Heart right ventricle (tissue), 16 donors: ENCODE measurements at regions of chr9 and their contacts with region 1.

Region 1: DNA sequence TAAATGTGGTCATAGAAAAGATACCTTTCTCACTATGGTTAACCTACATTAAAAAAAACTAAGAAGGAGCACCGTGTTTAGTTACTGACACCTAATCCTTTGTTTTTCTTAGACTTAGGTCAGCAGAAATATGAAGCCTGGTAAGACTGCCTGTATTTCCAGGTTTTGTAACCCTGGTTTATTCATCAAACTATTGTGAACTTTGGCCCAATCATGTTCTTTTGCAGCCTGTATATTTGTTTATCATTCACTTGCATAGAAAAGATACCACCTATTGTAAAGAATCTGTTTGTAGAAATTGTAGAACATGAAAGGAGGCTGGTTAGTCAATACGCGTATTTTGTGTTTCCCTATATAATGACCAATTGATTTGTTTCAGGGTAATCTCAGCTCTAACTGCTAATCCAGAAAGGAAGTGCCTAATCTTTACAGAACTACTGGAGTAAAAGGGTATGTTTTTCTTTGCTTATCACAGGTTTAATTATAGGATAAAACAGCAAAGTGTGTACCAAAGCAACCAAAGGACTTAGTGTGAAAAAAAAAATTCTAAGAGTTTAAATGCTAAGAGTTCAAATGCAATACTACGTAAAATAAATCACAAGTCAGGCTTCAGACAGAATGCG is 103.6 kb downstream of the LURAP1L start:
- DNase-seq: no peak
- ATAC-seq: no peak
- H3K4me3 ChIP-seq: no peak overlapping the region
- H3K27ac ChIP-seq: no peak overlapping the region
- H3K4me1 ChIP-seq: peaks cover 0 to 47% (median 10%) of the 10 kb centered on the region in 9 donors
- H3K27me3 ChIP-seq: no peaks in the 10 kb centered on the region
- CTCF ChIP-seq: no peak

Region 2: GRCh38 chr9:12813960-12814876 is 64.2 kb before region 1 on chr9:
- intact Hi-C with region 1: loop called in 3 of 10 experiments (anchors 5 to 10 kb)
- DNase-seq: peak; percentile 11 to 15
- ATAC-seq: peak in 7 of 8 donors; percentile 59 to 93 (median 84)
- H3K4me3 ChIP-seq: peak overlapping the region in 4 of 10 donors; percentile 1 to 31 (median 12)
- H3K27ac ChIP-seq: peak overlapping the region in 7 of 10 donors; percentile 17 to 67 (median 49)
- H3K4me1 ChIP-seq: peaks cover 0 to 54% (median 20%) of the 10 kb centered on the region in 9 donors
- H3K27me3 ChIP-seq: no peaks in the 10 kb centered on the region
- CTCF ChIP-seq: peak in 3 of 9 donors; percentile 26 to 47 (median 41)

Region 3: DNA sequence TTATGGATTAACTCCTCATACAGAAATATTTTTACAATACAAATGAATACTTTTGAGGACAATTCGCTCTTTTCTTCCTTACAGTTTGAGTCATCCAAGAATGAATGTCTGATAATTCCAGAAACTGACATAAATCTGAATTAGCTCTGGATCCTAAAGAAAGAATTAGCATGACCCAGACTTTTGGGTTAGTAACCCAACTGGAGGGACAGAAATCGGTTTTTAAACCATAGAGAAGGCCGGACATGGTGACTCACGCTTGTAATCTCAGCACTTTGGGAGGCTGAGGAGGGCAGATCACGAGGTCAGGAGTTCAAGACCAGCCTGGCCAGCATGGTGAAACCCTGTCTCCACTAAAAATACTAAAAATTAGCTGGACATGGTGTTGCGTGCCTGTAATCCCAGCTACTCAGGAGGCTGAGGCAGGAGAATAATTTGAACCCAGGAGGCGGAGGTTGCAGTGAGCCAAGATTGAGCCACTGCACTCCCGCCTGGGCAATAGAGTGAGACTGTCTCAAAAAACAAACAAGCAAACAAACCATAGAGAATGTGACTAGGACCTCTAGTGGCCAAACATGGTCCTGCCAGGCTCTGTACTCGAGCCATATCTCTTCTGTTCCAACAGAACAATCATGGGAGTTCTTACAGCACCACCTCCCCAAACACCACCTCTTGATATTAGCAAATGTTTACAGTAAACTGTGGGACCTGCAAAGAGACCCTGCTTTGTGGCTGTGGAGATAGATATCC is 58.9 kb before region 1 on chr9:
- intact Hi-C with region 1: loop called in 5 of 10 experiments (anchors 5 to 10 kb)
- DNase-seq: no peak
- ATAC-seq: no peak
- H3K4me3 ChIP-seq: no peak overlapping the region
- H3K27ac ChIP-seq: peak overlapping the region in 2 of 10 donors; percentile 2 to 56
- H3K4me1 ChIP-seq: peaks cover 0 to 25% (median 14%) of the 10 kb centered on the region in 9 donors
- H3K27me3 ChIP-seq: no peaks in the 10 kb centered on the region
- CTCF ChIP-seq: peak; percentile 15 to 48 (median 30)